ENCODE measurements at regions of chr6 and their contacts with region 1.

Region 1: GRCh38 chr6:168060521-168060931 is 18.5 kb downstream of the FRMD1 start:
- DNase-seq: peak; percentile 65
- ATAC-seq: peak; percentile 35
- H3K4me3 Mint-ChIP-seq: no peak overlapping the region
- H3K27ac Mint-ChIP-seq: no peak overlapping the region
- H3K4me1 Mint-ChIP-seq: no peaks in the 10 kb centered on the region
- H3K27me3 Mint-ChIP-seq: no peaks in the 10 kb centered on the region
- CTCF ChIP-seq: no peak

Region 2: DNA sequence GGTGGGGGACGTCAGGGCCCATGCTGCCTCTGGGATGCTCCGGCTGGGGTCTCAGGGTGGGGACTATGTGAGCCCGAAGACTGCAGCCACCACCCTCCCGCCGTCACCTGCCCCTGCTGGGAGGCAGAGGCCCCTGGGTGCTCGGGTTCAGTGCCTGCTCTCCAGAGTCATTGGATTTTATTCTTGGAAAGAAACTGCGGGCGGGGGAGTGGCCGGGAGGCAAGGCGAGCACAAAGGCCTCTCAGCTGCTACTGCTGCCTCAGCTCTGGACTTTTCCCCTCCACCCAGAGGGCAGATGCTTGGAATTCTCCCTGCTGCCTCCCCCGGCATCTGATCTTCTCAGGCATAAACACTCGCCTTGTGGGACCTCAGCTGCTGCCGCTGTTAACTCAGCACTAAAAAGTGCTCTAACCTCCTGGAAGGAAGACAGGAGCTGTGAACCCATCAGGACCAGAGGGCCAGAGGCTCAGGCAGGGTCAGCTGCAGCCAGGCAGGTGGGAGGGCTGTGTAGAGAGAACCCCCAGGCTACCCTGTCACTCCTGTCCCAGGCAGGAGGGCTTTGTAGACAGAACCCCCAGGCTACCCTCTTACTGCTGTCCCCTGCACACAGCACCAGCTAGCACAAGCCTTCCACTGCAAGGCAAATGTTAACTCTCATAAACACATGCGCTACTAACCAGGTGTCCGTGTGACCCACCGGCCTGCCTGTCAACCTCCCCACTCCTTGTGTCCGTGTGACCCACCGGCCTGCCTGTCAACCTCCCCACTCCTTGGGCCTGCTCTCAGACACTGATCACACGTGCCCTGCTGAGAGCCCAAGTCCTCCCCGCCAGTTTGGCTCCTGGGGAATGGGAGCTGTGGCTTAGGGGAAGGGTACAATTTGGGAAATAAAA is 27.9 kb after region 1 on chr6:
- CTCF ChIA-PET with region 1: interaction called, 16 read pairs
- POLR2A ChIA-PET with region 1: no interaction called
- DNase-seq: peak; percentile 51
- ATAC-seq: peak; percentile 65
- H3K4me3 Mint-ChIP-seq: no peak overlapping the region
- H3K27ac Mint-ChIP-seq: no peak overlapping the region
- H3K4me1 Mint-ChIP-seq: peaks cover 34% of the 10 kb centered on the region
- H3K27me3 Mint-ChIP-seq: no peaks in the 10 kb centered on the region
- CTCF ChIP-seq: no peak

Region 3: GRCh38 chr6:168117942-168118341 is 57.4 kb after region 1 on chr6:
- CTCF ChIA-PET with region 1: interaction called, 38 read pairs
- POLR2A ChIA-PET with region 1: no interaction called
- DNase-seq: no peak
- ATAC-seq: peak; percentile 54
- H3K4me3 Mint-ChIP-seq: no peak overlapping the region
- H3K27ac Mint-ChIP-seq: no peak overlapping the region
- H3K4me1 Mint-ChIP-seq: peaks cover 19% of the 10 kb centered on the region
- H3K27me3 Mint-ChIP-seq: peaks cover 7% of the 10 kb centered on the region
- CTCF ChIP-seq: no peak

Measured in WTC11 (cell line).